Prostate gland (tissue), 2 donors: ENCODE measurements at regions of chr1 and their contacts with region 1.

Region 1: GRCh38 chr1:65067491-65068201 is 80.4 kb upstream of the AK4 start:
- DNase-seq: peak; percentile 77
- H3K4me3 ChIP-seq: peak overlapping the region; percentile 86 to 96
- H3K27ac ChIP-seq: peak overlapping the region; percentile 98 to 100
- H3K4me1 ChIP-seq: peaks cover 10% of the 10 kb centered on the region
- H3K27me3 ChIP-seq: no peaks in the 10 kb centered on the region
- CTCF ChIP-seq: no peak
- POLR2A ChIP-seq: peak; percentile 67

Region 2: GRCh38 chr1:64744492-64745180 is 323.0 kb before region 1 on chr1 and contains the start of gene RAVER2:
- intact Hi-C with region 1: loop called (anchors 10 kb)
- DNase-seq: peak; percentile 84
- H3K4me3 ChIP-seq: peak within 1 kb of the TSS; percentile 68 to 69
- H3K27ac ChIP-seq: peak within 1 kb of the TSS; percentile 81 to 82
- H3K4me1 ChIP-seq: no peaks in the 10 kb centered on the region
- H3K27me3 ChIP-seq: no peaks in the 10 kb centered on the region
- CTCF ChIP-seq: peak in 2 of 4 experiments; percentile 39 to 53
- POLR2A ChIP-seq: peak; percentile 52
- total RNA-seq, gene RAVER2: 11.8 to 18.3 TPM

Region 3: GRCh38 chr1:65002508-65003315 is 64.9 kb before region 1 on chr1:
- intact Hi-C with region 1: loop called (anchors 5 kb)
- DNase-seq: peak; percentile 81
- H3K4me3 ChIP-seq: peak overlapping the region; percentile 48 to 57
- H3K27ac ChIP-seq: peak overlapping the region; percentile 86 to 90
- H3K4me1 ChIP-seq: peaks cover 3% of the 10 kb centered on the region
- H3K27me3 ChIP-seq: no peaks in the 10 kb centered on the region
- CTCF ChIP-seq: no peak
- POLR2A ChIP-seq: peak; percentile 34

Region 4: DNA sequence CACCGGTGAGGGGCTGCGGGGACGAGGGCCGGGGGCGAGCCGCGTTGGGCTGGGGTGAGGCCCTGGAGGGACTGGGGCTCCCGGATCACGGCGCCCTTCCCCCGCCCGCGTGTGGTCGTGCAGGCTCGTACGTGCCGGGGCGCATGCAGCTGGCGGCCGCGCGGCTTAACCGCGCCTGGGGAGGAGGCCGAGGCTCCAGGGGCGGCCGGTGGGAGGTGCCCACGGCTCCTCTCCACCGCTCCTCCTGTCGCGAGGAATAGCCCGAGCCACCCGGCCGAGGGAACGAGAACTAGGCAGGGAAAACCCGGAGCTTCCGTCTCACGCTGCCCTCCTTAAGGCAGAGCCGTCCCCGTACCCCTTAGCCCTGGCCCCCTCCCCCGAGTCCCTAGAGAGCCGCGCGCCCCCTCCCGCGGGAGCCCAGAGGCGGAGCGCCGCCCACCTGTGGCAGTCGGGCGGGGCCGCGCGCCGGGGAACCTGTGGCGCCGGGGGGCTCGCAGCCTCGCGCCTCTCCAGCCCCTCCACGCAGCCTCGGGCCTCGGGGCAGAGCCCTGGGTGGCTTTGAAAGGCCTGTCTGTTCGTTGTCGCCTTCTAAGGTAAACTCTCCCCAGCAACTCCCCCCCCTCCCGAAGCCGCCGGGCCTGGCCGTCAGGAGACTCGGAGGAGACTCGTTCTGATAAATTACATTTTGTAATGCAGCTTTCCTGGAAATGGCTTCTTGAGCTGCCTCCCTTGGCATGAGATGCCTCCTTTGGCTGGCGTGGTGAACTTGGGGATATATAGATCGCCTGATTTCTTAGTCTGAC is 81.1 kb after region 1 on chr1:
- intact Hi-C with region 1: loop called (anchors 5 kb)
- DNase-seq: peak; percentile 54
- H3K4me3 ChIP-seq: peak overlapping the region; percentile 66 to 75
- H3K27ac ChIP-seq: peak overlapping the region; percentile 91 to 92
- H3K4me1 ChIP-seq: no peaks in the 10 kb centered on the region
- H3K27me3 ChIP-seq: no peaks in the 10 kb centered on the region
- CTCF ChIP-seq: no peak
- POLR2A ChIP-seq: peak; percentile 27

Region 5: GRCh38 chr1:65209005-65209885 is 141.6 kb after region 1 on chr1:
- intact Hi-C with region 1: loop called (anchors 5 kb)
- DNase-seq: peak; percentile 51
- H3K4me3 ChIP-seq: no peak overlapping the region
- H3K27ac ChIP-seq: no peak overlapping the region
- H3K4me1 ChIP-seq: no peaks in the 10 kb centered on the region
- H3K27me3 ChIP-seq: no peaks in the 10 kb centered on the region
- CTCF ChIP-seq: peak; percentile 29 to 70 (median 62)
- POLR2A ChIP-seq: no peak

Region 6: DNA sequence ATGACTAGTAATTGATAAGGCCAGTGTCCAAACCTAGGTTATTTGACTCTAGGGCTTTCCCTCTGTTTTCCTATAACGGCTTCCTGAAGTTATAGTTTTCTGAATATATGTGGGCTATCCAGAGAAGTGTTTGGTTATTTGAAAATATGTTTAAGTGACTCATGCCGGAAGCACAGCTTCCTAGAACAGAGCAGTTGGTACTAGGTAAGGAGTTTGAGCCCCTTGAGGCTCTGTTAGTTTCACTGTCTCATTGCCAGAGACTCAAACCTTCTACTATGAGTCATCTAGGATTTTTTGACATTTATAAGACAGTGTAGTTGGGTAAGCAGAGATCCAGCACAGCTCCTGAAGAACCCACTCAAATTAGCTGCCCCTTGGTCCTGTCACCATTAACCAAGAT is 325.7 kb after region 1 on chr1:
- intact Hi-C with region 1: no loop called
- DNase-seq: no peak
- H3K4me3 ChIP-seq: no peak overlapping the region
- H3K27ac ChIP-seq: no peak overlapping the region
- H3K4me1 ChIP-seq: no peaks in the 10 kb centered on the region
- H3K27me3 ChIP-seq: no peaks in the 10 kb centered on the region
- CTCF ChIP-seq: no peak
- POLR2A ChIP-seq: no peak

Region 7: GRCh38 chr1:65419681-65420589 is 352.3 kb after region 1 on chr1:
- intact Hi-C with region 1: loop called (anchors 10 kb)
- DNase-seq: peak; percentile 98
- H3K4me3 ChIP-seq: peak overlapping the region; percentile 81 to 84
- H3K27ac ChIP-seq: peak overlapping the region; percentile 94 to 97
- H3K4me1 ChIP-seq: no peaks in the 10 kb centered on the region
- H3K27me3 ChIP-seq: no peaks in the 10 kb centered on the region
- CTCF ChIP-seq: peak in 1 of 4 experiments; percentile 6
- POLR2A ChIP-seq: peak; percentile 45